ENCODE measurements at regions of chr1 and their contacts with region 1.

Region 1: DNA sequence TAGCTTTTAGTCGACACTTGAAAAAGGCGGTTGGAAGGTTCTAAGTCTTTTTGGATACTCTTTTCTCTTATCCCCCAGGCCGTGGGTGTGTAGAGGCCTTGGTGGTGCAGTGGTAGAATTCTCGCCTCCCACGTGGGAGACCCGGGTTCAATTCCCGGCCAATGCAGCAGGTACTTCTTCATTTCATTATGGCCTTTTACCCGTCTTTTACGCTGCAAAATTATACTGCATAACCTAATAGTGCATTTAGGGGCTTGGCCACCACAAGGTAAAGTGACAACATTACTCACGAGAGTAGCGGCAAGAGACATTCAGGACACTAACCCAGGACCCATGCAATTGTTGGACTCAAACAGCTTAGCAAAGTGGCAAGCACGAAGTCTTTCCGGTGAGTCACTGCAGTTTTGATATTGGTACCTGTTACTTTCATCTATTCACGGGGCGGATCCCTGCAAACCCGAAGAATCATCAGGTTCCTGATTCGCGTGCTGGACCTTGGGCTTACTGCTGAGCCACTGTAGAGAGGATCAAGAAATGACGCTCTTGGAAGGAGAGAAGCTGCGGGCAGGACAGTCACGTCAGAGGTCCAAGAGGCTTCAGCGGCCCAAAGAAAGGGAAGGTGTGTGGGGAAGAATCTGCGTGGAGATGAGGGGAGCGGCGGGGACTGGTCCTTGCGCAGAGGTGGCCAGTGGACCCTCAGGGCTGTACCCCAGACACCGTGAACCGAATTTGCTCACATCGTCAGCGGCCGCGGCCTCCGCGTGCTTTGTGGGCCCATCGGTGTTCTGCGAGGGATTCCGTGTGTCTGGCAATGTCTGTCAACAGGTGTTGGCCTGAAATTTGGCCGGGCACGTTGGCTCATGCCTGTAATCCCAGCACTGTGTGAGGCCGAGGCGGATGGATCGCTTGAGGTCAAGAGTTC is 12.9 kb upstream of the RNU1-4 start:
- DNase-seq: peak; percentile 27 to 58 (median 38)
- ATAC-seq: peak; percentile 82
- H3K4me3 ChIP-seq: no peak overlapping the region
- H3K27ac ChIP-seq: no peak overlapping the region
- H3K4me1 ChIP-seq: peaks cover 0 to 14% of the 10 kb centered on the region in 2 experiments; a peak in 2 of 5 replicates
- H3K27me3 ChIP-seq: peaks cover 5 to 8% of the 10 kb centered on the region in 2 experiments; a peak in 4 of 5 replicates
- CTCF ChIP-seq: no peak
- EP300 ChIP-seq: 0 out of 2 replicates have a peak, but pooled peaks have one; percentile 14
- POLR2A ChIP-seq: no peak
- RAD21 ChIP-seq: no peak

Region 2: DNA sequence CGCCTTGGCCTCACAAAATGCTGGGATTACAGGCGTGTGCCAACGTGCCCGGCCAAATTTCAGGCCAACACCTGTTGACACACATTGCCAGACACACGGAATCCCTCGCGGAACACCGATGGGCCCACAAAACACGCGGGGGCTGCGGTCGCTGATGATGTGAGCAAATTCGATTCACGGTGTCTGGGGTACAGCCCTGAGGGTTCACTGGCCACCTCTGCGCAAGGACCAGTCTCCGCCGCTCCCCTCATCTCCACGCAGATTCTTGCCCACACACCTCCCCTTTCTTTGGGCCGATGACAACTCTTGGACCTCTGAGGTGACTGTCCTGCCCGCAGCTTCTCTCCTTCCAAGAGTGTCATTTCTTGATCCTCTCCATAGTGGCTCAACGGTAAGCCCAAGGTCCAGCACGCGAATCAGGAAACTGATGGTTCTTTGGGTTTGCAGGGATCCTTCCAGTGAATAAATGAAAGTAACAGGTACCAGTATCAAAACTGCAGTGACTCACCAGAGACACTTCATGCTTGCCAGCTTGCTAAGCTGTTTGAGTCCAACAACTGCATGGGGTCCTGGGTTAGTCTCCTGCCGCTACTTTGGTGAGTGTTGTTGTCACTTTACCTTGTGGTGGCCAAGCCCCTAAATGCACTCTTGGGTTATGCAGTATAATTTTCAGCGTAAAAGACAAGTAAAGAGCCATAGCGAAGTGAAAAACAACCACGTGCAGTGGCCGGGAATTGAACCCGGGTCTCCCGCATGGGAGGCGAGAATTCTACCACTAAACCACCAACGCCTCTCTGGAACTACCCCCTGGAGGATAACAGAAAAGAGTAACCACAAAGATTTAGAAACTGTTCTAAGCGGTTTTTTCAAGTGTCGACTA is 49.7 kb before region 1 on chr1:
- CTCF ChIA-PET with region 1: no interaction called
- POLR2A ChIA-PET with region 1: no interaction called
- in situ Hi-C with region 1: loop called (anchors 5 kb)
- intact Hi-C with region 1: no loop called
- DNase-seq: peak; percentile 69 to 92 (median 76)
- ATAC-seq: peak; percentile 98
- H3K4me3 ChIP-seq: peak overlapping the region; percentile 25
- H3K27ac ChIP-seq: peak overlapping the region; percentile 16; the same call in 2 of the 3 replicates
- H3K4me1 ChIP-seq: peaks cover 0 to 15% of the 10 kb centered on the region in 2 experiments; a peak in 3 of 5 replicates
- H3K27me3 ChIP-seq: no peaks in the 10 kb centered on the region
- CTCF ChIP-seq: peak in 2 of 3 experiments; percentile 1 to 12; a peak in 1 of 6 replicates
- EP300 ChIP-seq: peak; percentile 85
- POLR2A ChIP-seq: no peak
- RAD21 ChIP-seq: 0 out of 4 replicates have a peak, but pooled peaks of 1 of the 2 experiments have one; percentile 18

Region 3: DNA sequence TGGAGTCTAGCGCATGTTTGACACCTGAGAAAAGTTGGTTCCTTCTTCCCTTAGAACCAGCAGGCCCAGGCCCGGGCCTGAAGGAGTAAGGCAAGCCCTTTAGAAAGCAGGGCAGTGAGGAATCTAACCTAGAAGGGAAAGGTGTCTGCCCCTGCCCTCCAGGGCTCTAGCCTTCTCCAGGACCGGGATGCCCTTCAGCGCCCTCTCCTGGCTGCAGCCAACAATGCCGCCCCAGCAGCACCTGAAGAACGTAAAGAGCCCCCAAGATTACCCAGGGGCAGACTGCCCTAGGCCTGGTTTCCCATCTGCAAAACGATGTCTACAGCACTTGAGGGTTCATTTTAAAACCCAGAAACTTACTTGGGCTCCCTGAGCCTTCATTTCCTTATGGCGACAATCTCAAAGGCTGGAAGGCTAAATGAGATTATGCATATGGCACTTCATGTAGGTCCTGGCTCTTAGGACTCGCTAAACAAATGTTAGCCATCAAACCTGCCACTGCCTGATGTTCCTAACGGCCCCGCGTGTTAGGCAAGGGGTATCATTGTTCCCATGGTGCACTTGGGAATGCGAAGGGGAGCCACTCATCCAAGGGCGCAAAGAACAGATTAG is 1646.5 kb after region 1 on chr1:
- CTCF ChIA-PET with region 1: no interaction called
- POLR2A ChIA-PET with region 1: no interaction called
- in situ Hi-C with region 1: no loop called
- intact Hi-C with region 1: no loop called
- DNase-seq: peak; percentile 60 to 78 (median 75)
- ATAC-seq: peak; percentile 98
- H3K4me3 ChIP-seq: no peak overlapping the region
- H3K27ac ChIP-seq: no peak overlapping the region
- H3K4me1 ChIP-seq: peaks cover 0 to 3% of the 10 kb centered on the region in 2 experiments; a peak in 1 of 5 replicates
- H3K27me3 ChIP-seq: peaks cover 0 to 13% of the 10 kb centered on the region in 2 experiments; a peak in 2 of 5 replicates
- CTCF ChIP-seq: peak; percentile 87 to 90 (median 87)
- EP300 ChIP-seq: no peak
- POLR2A ChIP-seq: no peak
- RAD21 ChIP-seq: peak; percentile 50 to 60

Measured in K562 (cell line).